ENCODE measurements at regions of chr12 and their contacts with region 1.

Region 1: GRCh38 chr12:14629832-14630710 is 62.4 kb upstream of the PLBD1 start:
- DNase-seq: peak; percentile 81
- H3K4me3 ChIP-seq: no peak overlapping the region
- H3K27ac ChIP-seq: no peak overlapping the region
- H3K4me1 ChIP-seq: no peaks in the 10 kb centered on the region
- H3K27me3 ChIP-seq: no peaks in the 10 kb centered on the region
- CTCF ChIP-seq: peak; percentile 97

Region 2: GRCh38 chr12:14514154-14514842 is 115.8 kb before region 1 on chr12:
- CTCF ChIA-PET with region 1: no interaction called
- POLR2A ChIA-PET with region 1: no interaction called
- intact Hi-C with region 1: no loop called
- DNase-seq: peak; percentile 89
- H3K4me3 ChIP-seq: no peak overlapping the region
- H3K27ac ChIP-seq: no peak overlapping the region
- H3K4me1 ChIP-seq: peaks cover 13% of the 10 kb centered on the region
- H3K27me3 ChIP-seq: no peaks in the 10 kb centered on the region
- CTCF ChIP-seq: peak; percentile 78

Region 3: GRCh38 chr12:14664510-14664909 is 34.4 kb after region 1 on chr12:
- CTCF ChIA-PET with region 1: no interaction called
- POLR2A ChIA-PET with region 1: no interaction called
- intact Hi-C with region 1: loop called (anchors 1 kb)
- DNase-seq: peak; percentile 65
- H3K4me3 ChIP-seq: no peak overlapping the region
- H3K27ac ChIP-seq: no peak overlapping the region
- H3K4me1 ChIP-seq: no peaks in the 10 kb centered on the region
- H3K27me3 ChIP-seq: no peaks in the 10 kb centered on the region
- CTCF ChIP-seq: peak; percentile 78

Region 4: GRCh38 chr12:14716848-14717444 is 86.9 kb after region 1 on chr12:
- CTCF ChIA-PET with region 1: no interaction called
- POLR2A ChIA-PET with region 1: no interaction called
- intact Hi-C with region 1: loop called (anchors 1 kb)
- DNase-seq: peak; percentile 76
- H3K4me3 ChIP-seq: no peak overlapping the region
- H3K27ac ChIP-seq: no peak overlapping the region
- H3K4me1 ChIP-seq: no peaks in the 10 kb centered on the region
- H3K27me3 ChIP-seq: no peaks in the 10 kb centered on the region
- CTCF ChIP-seq: peak; percentile 72

Region 5: GRCh38 chr12:14769969-14770495 is 140.0 kb after region 1 on chr12:
- CTCF ChIA-PET with region 1: no interaction called
- POLR2A ChIA-PET with region 1: no interaction called
- intact Hi-C with region 1: no loop called
- DNase-seq: peak; percentile 77
- H3K4me3 ChIP-seq: peak overlapping the region; percentile 57
- H3K27ac ChIP-seq: peak overlapping the region; percentile 82
- H3K4me1 ChIP-seq: peaks cover 16% of the 10 kb centered on the region
- H3K27me3 ChIP-seq: no peaks in the 10 kb centered on the region
- CTCF ChIP-seq: peak; percentile 79

Region 6: GRCh38 chr12:14858513-14858912 is 228.4 kb after region 1 on chr12:
- CTCF ChIA-PET with region 1: no interaction called
- POLR2A ChIA-PET with region 1: no interaction called
- intact Hi-C with region 1: no loop called
- DNase-seq: no peak
- H3K4me3 ChIP-seq: no peak overlapping the region
- H3K27ac ChIP-seq: no peak overlapping the region
- H3K4me1 ChIP-seq: no peaks in the 10 kb centered on the region
- H3K27me3 ChIP-seq: no peaks in the 10 kb centered on the region
- CTCF ChIP-seq: no peak

Region 7: DNA sequence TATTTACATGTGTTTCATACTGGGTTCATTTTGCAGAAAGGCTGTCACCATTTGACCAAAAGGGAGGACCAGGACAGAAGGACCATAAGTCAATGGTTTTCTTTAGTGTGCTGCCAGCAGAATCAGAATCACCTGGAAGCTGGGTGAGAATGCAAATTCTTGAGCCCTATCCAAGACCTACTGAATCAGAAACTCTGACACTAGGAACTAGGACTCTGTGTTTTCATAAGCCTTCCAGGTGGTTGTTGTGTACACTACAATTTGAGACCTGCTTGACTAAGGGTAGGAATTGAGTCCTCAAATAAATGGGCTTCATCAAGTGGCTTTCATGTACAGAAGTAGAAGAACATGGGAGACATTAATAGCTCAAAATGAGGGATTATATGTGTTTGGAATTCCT is 375.0 kb after region 1 on chr12:
- CTCF ChIA-PET with region 1: no interaction called
- POLR2A ChIA-PET with region 1: no interaction called
- intact Hi-C with region 1: no loop called
- DNase-seq: no peak
- H3K4me3 ChIP-seq: no peak overlapping the region
- H3K27ac ChIP-seq: no peak overlapping the region
- H3K4me1 ChIP-seq: no peaks in the 10 kb centered on the region
- H3K27me3 ChIP-seq: no peaks in the 10 kb centered on the region
- CTCF ChIP-seq: no peak